ENCODE measurements at regions of chr11 and their contacts with region 1.

Region 1: DNA sequence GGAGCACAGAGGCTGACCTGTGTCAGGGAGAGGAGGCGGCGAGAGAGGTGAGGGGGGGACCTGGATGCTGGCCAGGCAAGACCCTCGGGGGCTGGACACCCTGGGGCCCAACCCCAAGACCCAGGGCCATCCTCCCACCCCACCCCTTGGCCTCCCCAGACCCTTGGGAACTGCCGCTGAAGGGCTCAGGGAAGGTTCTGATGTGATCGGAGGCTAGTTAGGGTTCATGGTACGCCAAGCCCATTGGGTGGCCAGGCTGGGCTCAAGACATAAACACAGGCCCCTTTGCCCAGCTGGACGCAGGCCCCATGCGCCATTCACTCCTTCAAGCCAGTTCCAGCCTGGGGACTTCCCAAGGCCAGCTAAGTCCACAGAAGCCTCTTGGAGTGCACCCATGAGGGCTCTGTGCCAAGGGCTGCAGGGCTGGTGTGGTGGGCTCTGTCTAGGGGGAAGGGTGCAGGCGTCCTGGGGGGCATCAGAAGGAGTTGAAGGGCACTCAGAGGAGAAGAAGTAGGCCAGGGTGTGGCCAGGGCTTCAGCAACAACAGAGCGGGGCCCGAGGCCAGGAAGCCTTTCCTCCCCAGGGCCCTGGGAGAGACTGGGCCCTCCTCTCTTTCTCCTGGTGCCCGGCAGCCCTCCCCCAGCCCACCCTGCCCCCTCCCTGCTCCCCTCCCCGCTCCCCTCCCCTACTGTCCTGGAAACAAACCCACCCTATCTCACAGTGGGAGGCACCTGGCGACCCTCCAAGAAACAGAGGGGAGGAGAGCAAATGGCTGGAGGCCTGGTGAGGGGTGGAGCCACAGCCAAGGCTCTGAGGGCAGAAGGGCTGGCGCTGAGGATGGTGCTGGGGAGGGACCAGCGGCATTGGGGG is 12.9 kb downstream of the TSPAN32 start:
- DNase-seq: peak; percentile 95

Region 2: DNA sequence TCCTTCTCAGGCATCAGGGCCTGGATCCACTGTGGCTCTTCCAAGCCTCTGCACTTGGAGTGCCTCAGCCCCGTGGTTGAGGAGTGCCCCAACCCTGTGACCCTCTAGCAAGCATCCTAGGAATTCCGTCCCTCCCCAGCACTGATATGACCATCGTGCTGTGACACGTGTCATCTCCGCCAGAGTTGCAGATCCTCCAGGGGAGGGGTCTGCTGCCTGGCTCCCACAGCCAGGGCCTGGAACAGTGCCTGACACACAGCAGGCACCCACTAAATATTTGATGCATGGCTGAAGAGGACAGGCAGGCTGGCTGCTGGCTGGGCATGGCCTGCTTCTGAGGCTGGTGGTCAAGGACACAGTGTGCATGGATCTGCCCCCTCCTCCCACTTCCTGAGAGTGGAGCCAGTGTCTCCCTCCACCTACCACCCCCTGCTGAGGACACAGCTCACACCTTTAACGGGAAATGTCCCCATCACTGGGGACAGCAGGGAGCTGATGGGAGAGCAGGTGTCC is 60.6 kb after region 1 on chr11:
- intact Hi-C with region 1: loop called (anchors 1 kb)
- DNase-seq: peak; percentile 86

Region 3: DNA sequence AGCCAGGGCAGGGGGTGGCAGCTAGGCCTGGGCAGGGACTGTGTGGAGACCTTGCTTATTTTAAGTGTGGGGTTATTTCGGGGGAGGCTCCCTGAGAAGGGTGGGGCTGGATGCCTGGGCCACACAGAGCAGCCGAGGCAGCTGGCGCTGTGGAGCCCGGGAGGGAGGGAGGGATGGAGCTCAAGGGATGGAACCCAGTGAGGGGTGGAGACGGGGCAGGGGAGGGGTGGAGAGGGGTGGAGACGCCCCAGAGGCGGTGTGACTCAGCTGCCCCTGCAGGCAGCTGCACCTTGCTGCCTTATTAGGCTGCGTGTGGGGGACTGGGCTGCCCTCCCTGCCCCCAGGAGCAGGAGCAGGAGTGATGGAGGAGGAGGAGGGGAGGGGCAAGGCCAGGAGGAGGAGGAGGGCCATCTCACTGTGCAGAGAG is 76.0 kb after region 1 on chr11:
- intact Hi-C with region 1: loop called (anchors 2 kb)
- DNase-seq: no peak

Region 4: GRCh38 chr11:2462908-2463765 is 148.4 kb after region 1 on chr11:
- intact Hi-C with region 1: no loop called
- DNase-seq: peak; percentile 90

Region 5: DNA sequence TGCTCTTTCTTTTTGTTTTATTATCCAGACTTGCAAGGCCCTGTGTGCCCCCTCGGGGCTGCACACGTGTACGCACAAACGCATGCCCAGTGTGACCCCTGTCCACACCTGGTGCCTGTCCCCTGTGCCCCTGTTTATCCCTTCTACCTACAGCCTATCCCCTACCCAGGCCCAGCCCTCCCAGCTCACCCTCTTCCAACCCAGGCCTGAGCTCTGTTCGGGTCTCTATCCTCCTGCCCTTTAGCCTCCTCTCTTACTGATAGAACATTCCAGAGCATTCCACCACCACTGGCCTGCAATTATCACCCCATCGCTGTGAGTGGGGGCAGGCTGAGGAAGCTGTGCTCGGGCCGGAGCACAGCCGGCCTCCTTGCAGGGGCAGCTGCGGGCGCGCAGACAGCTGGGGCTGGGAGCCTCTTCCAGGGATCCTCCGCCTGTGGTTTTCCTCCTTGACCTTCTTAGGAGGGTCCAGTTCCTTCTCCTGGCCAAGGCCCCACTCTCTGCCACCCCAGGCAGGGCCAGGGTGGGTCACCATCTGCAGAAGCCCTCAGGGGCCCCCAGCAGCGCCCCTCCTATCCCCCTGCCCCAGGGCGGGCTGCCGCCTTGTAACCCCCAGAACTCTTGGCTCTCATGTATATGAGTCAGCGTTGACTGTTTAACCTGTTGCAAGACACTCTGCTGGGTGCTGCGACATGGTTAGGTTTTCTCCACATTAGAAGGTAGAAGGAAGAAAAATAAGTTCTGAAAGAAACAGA is 426.8 kb after region 1 on chr11:
- intact Hi-C with region 1: no loop called
- DNase-seq: no peak

Measured in cardiac septum (tissue), 1 donor.